ENCODE measurements at regions of chr7 and their contacts with region 1.

Region 1: GRCh38 chr7:30284298-30285066 is at the start of gene ZNRF2:
- DNase-seq: peak; percentile 99
- H3K4me3 Mint-ChIP-seq: peak within 1 kb of the TSS; percentile 76
- H3K27ac Mint-ChIP-seq: peak within 1 kb of the TSS; percentile 78
- H3K4me1 Mint-ChIP-seq: peaks cover 43% of the 10 kb centered on the region
- H3K27me3 Mint-ChIP-seq: no peaks in the 10 kb centered on the region
- total RNA-seq, gene ZNRF2: 10.2 and 10.4 TPM in 2 replicates

Region 2: GRCh38 chr7:29793507-29793906 is 491.0 kb before region 1 on chr7:
- intact Hi-C with region 1: no loop called
- DNase-seq: no peak
- H3K4me3 Mint-ChIP-seq: no peak overlapping the region
- H3K27ac Mint-ChIP-seq: no peak overlapping the region
- H3K4me1 Mint-ChIP-seq: no peaks in the 10 kb centered on the region
- H3K27me3 Mint-ChIP-seq: peaks cover 6% of the 10 kb centered on the region

Region 3: GRCh38 chr7:30164567-30164966 is 119.9 kb before region 1 on chr7:
- intact Hi-C with region 1: loop called (anchors 2 kb)
- DNase-seq: no peak
- H3K4me3 Mint-ChIP-seq: no peak overlapping the region
- H3K27ac Mint-ChIP-seq: peak overlapping the region; percentile 48
- H3K4me1 Mint-ChIP-seq: peaks cover 40% of the 10 kb centered on the region
- H3K27me3 Mint-ChIP-seq: peaks cover 2% of the 10 kb centered on the region

Region 4: GRCh38 chr7:30301751-30302150 is 17.3 kb after region 1 on chr7:
- intact Hi-C with region 1: no loop called
- DNase-seq: no peak
- H3K4me3 Mint-ChIP-seq: no peak overlapping the region
- H3K27ac Mint-ChIP-seq: no peak overlapping the region
- H3K4me1 Mint-ChIP-seq: peaks cover 18% of the 10 kb centered on the region
- H3K27me3 Mint-ChIP-seq: no peaks in the 10 kb centered on the region

Region 5: GRCh38 chr7:30322271-30323005 is 38.0 kb after region 1 on chr7:
- intact Hi-C with region 1: loop called (anchors 1 kb)
- DNase-seq: peak; percentile 16
- H3K4me3 Mint-ChIP-seq: peak overlapping the region; percentile 70
- H3K27ac Mint-ChIP-seq: peak overlapping the region; percentile 92
- H3K4me1 Mint-ChIP-seq: peaks cover 54% of the 10 kb centered on the region
- H3K27me3 Mint-ChIP-seq: no peaks in the 10 kb centered on the region

Region 6: GRCh38 chr7:30348083-30348560 is 63.6 kb after region 1 on chr7:
- intact Hi-C with region 1: loop called (anchors 1 kb)
- DNase-seq: peak; percentile 44
- H3K4me3 Mint-ChIP-seq: peak overlapping the region; percentile 53
- H3K27ac Mint-ChIP-seq: peak overlapping the region; percentile 85
- H3K4me1 Mint-ChIP-seq: peaks cover 59% of the 10 kb centered on the region
- H3K27me3 Mint-ChIP-seq: no peaks in the 10 kb centered on the region

Region 7: DNA sequence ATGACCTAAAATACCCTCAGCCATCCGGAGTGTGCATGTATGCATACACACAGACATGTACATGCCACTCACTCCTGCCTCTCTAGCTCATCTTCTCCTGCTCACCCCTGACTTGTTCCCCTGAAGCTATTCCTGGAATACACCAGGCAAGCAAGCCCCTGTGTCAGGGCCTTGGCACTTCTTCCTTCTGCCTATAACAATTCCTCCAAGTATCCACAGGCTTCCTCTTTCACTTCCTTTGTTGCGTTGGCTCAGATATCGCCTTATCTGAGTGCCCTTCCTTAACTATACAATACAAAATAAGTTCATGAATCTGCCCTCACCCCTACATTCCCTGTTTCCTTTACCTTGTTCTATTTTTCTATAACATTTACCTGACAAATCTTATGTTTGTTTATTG is 105.3 kb after region 1 on chr7:
- intact Hi-C with region 1: no loop called
- DNase-seq: no peak
- H3K4me3 Mint-ChIP-seq: no peak overlapping the region
- H3K27ac Mint-ChIP-seq: no peak overlapping the region
- H3K4me1 Mint-ChIP-seq: no peaks in the 10 kb centered on the region
- H3K27me3 Mint-ChIP-seq: no peaks in the 10 kb centered on the region

Region 8: DNA sequence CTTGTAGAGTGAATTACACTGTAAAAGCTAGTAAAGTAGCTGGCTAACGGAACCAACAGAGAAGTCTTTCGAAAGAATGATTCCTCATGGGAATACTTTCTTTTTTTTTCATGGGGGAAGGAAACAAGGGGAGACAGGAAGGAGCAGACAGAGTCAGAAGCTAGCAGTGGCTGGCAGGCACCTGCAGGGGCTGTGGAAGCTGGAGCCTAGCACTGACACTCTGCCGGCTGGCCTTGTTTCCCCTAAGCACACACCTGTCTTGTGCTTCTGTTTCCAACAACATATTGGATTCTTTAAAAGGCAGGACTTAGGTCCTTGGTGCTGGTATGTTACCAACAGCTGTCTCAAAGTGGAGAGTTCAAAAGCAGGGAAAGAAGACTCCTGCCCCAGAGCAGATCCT is 169.4 kb after region 1 on chr7:
- intact Hi-C with region 1: no loop called
- DNase-seq: no peak
- H3K4me3 Mint-ChIP-seq: no peak overlapping the region
- H3K27ac Mint-ChIP-seq: no peak overlapping the region
- H3K4me1 Mint-ChIP-seq: no peaks in the 10 kb centered on the region
- H3K27me3 Mint-ChIP-seq: no peaks in the 10 kb centered on the region

Region 9: GRCh38 chr7:30504347-30505173 is 220.1 kb after region 1 on chr7 and contains the start of gene GGCT:
- intact Hi-C with region 1: loop called (anchors 2 kb)
- DNase-seq: peak; percentile 97
- H3K4me3 Mint-ChIP-seq: peak within 1 kb of the TSS; percentile 85
- H3K27ac Mint-ChIP-seq: peak within 1 kb of the TSS; percentile 88
- H3K4me1 Mint-ChIP-seq: peaks cover 50% of the 10 kb centered on the region
- H3K27me3 Mint-ChIP-seq: no peaks in the 10 kb centered on the region
- total RNA-seq, gene GGCT: 71.6 and 72.7 TPM in 2 replicates

Measured in activated T-helper 2 cell treated with anti-CD3 and anti-CD28 coated beads, Interferon-gamma antibody, Interleukin-2, Interleukin-4, amounts not matched to agents 10 μg/mL and 5 μg/mL and 100 μg/mL, durations not matched to agents 14 hours and 24 hours and 36 hours (primary cell).